ENCODE measurements at regions of chr13 and their contacts with region 1.

Region 1: GRCh38 chr13:97124916-97125809 is 97.0 kb upstream of the MBNL2 start:
- DNase-seq: no peak
- H3K4me3 Mint-ChIP-seq: no peak overlapping the region
- H3K27ac Mint-ChIP-seq: peak overlapping the region; percentile 47
- H3K4me1 Mint-ChIP-seq: peaks cover 27% of the 10 kb centered on the region
- H3K27me3 Mint-ChIP-seq: peaks cover 35% of the 10 kb centered on the region

Region 2: GRCh38 chr13:96650301-96650886 is 474.8 kb before region 1 on chr13:
- intact Hi-C with region 1: no loop called
- DNase-seq: no peak
- H3K4me3 Mint-ChIP-seq: no peak overlapping the region
- H3K27ac Mint-ChIP-seq: no peak overlapping the region
- H3K4me1 Mint-ChIP-seq: no peaks in the 10 kb centered on the region
- H3K27me3 Mint-ChIP-seq: no peaks in the 10 kb centered on the region

Region 3: GRCh38 chr13:97100821-97101220 is 24.3 kb before region 1 on chr13:
- intact Hi-C with region 1: loop called (anchors 2 kb)
- DNase-seq: no peak
- H3K4me3 Mint-ChIP-seq: no peak overlapping the region
- H3K27ac Mint-ChIP-seq: no peak overlapping the region
- H3K4me1 Mint-ChIP-seq: peaks cover 20% of the 10 kb centered on the region
- H3K27me3 Mint-ChIP-seq: peaks cover 6% of the 10 kb centered on the region

Region 4: GRCh38 chr13:97141564-97142005 is 16.4 kb after region 1 on chr13:
- intact Hi-C with region 1: loop called (anchors 2 kb)
- DNase-seq: no peak
- H3K4me3 Mint-ChIP-seq: no peak overlapping the region
- H3K27ac Mint-ChIP-seq: no peak overlapping the region
- H3K4me1 Mint-ChIP-seq: peaks cover 12% of the 10 kb centered on the region
- H3K27me3 Mint-ChIP-seq: peaks cover 47% of the 10 kb centered on the region

Region 5: DNA sequence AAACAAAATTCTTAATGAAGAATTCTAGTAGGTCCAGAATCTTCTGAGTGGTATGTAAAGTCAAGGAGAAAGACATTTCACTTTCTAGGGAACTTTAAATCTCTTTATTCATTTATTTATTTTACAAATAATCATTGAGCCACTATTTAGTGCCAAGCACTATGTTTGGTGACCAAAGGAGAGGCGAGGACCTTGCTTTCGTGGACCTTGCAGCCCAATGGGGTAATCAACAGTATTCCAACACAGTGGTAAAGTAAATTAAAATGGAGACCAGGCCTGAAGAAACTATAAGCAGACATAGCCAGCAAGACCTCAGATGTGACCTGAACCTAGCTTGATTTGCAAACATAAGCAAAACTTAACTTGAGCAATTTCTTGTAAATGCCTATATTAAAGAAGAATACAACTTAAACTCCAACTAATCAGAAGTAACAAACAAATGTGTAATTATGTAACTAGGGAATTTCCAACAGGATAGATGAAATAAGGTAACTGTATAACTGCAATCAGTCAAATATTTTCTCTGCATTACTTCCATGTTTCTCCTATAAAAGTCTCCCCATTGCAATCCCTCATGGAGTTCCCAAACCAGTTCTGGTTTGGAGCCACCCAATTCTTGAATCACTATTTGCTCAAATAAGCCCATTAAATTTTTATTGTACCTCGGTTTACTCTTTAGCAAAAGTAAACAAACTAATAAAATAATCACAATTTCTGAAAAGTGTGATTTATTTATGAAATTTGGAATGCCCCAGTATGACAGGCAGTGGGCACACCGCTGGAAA is 164.5 kb after region 1 on chr13:
- intact Hi-C with region 1: loop called (anchors 2 kb)
- DNase-seq: no peak
- H3K4me3 Mint-ChIP-seq: no peak overlapping the region
- H3K27ac Mint-ChIP-seq: no peak overlapping the region
- H3K4me1 Mint-ChIP-seq: peaks cover 30% of the 10 kb centered on the region
- H3K27me3 Mint-ChIP-seq: no peaks in the 10 kb centered on the region

Region 6: GRCh38 chr13:98065468-98065867 is 940.3 kb after region 1 on chr13:
- intact Hi-C with region 1: no loop called
- DNase-seq: no peak
- H3K4me3 Mint-ChIP-seq: no peak overlapping the region
- H3K27ac Mint-ChIP-seq: no peak overlapping the region
- H3K4me1 Mint-ChIP-seq: no peaks in the 10 kb centered on the region
- H3K27me3 Mint-ChIP-seq: no peaks in the 10 kb centered on the region